PC-9 (cell line): ENCODE measurements at regions of chr9 and their contacts with region 1.

Region 1: DNA sequence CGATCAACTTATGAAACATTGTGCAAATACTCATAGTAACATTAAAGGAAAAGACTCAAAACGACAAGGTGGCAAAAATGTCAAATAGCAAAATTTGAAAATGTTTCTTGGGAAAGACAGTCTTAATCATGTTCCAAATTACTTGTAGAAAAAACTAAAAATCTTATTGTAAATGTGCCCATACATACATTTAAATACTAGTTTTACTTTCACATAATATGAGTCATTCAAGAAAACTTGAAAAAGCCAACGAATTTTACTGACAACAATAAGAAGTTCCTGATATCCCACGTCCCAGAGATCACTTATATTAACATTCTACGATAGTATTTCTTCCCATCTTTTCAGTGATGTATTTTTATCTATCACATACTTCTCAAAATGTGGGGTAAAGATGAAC is 13.7 kb downstream of the MLLT3 start:
- DNase-seq: no peak
- H3K4me3 ChIP-seq: no peak overlapping the region
- H3K27ac ChIP-seq: no peak overlapping the region
- H3K4me1 ChIP-seq: peaks cover 24% of the 10 kb centered on the region
- H3K27me3 ChIP-seq: no peaks in the 10 kb centered on the region
- CTCF ChIP-seq: no peak

Region 2: GRCh38 chr9:20419533-20419932 is 189.0 kb before region 1 on chr9:
- CTCF ChIA-PET with region 1: interaction called, 10 read pairs
- POLR2A ChIA-PET with region 1: no interaction called
- intact Hi-C with region 1: no loop called
- DNase-seq: no peak
- H3K4me3 ChIP-seq: no peak overlapping the region
- H3K27ac ChIP-seq: no peak overlapping the region
- H3K4me1 ChIP-seq: no peaks in the 10 kb centered on the region
- H3K27me3 ChIP-seq: no peaks in the 10 kb centered on the region
- CTCF ChIP-seq: no peak

Region 3: DNA sequence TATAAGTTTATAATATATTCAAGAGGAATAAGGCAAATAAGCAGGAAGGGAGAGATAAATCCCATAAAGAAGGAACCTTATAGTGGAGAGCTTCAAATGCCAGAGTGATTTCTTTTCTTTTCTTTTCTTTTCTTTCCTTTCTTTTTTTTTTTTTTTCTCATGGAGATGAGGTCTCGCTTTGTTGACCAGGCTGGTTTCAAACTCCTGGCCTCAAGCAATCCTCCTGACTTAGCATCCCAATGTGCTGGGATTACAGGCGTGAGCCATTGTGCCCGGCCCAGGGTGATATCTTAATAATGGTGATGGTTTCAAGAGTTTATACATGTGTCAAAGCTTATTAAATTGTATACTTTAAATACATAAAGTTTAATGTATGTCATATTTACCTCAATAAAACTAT is 55.9 kb after region 1 on chr9:
- CTCF ChIA-PET with region 1: no interaction called
- POLR2A ChIA-PET with region 1: no interaction called
- intact Hi-C with region 1: no loop called
- DNase-seq: no peak
- H3K4me3 ChIP-seq: no peak overlapping the region
- H3K27ac ChIP-seq: no peak overlapping the region
- H3K4me1 ChIP-seq: no peaks in the 10 kb centered on the region
- H3K27me3 ChIP-seq: no peaks in the 10 kb centered on the region
- CTCF ChIP-seq: no peak